ENCODE measurements at regions of chr12 and their contacts with region 1.

Region 1: GRCh38 chr12:95059984-95060383 is 13.4 kb downstream of the NR2C1 start:
- DNase-seq: no peak
- H3K4me3 ChIP-seq: no peak overlapping the region
- CTCF ChIP-seq: no peak

Region 2: GRCh38 chr12:95017482-95017881 is 42.5 kb before region 1 on chr12:
- in situ Hi-C with region 1: loop called (anchors 5 kb)
- DNase-seq: no peak
- H3K4me3 ChIP-seq: no peak overlapping the region
- CTCF ChIP-seq: no peak

Region 3: DNA sequence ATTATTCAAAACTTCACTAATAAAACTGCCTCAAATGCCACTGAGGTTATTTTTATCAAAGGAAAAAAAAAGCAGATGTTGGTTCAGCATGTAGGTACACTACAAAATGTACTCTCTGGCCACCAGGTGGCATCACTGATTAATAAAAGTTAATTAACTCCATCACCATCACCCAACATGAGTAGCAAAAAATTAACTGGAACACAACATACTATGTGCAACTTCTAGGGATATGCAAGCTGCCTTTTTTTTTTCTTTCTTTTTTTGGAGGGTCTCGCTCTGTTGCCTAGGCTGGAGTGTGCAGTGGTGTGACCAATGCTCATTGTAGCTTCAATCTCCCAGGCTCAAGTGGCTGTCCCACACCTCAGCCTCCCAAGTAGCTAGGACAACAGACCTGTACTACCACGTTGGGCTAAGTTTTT is 57.2 kb after region 1 on chr12:
- in situ Hi-C with region 1: no loop called
- DNase-seq: peak; percentile 60
- H3K4me3 ChIP-seq: no peak overlapping the region
- CTCF ChIP-seq: peak; percentile 42

Measured in astrocyte of the cerebellum (primary cell).